OCI-LY7 (cell line): ENCODE measurements at regions of chr2 and their contacts with region 1.

Region 1: DNA sequence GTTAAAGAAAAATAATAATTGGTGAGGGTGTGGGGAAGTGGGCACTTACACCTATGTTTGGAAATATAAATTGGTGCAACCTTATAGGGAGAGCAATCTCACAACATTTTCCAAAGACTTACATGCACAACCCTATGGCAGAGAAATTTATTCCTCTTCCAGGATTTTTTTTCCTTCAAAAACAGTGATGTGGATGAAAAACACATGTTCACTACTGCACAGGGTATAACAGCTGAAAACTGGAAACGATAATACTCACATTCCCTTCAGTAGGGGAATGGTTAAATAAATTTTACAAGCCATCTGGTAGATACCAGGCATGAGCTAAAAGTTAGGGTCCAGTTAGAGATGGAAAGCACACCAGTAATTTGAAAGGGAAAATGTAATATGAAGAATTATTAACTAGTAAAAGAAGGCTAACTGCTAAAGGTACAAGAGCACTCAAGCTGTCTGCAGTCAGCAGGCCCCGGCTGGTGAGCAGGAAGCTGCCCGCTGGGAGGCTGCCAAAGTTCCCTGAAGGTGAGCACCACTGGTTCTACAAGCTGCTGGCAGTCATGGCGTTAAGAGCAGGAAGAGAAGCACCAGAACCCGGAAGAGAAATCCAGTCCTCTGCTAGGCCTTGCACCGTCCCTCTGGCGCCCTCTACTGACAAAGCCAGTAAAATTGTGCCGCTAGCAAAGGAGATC is 28.4 kb upstream of the CASP8 start:
- DNase-seq: peak; percentile 96
- H3K4me3 ChIP-seq: peak overlapping the region; percentile 27
- H3K27ac ChIP-seq: peak overlapping the region; percentile 19
- H3K4me1 ChIP-seq: peaks cover 39% of the 10 kb centered on the region
- CTCF ChIP-seq: peak; percentile 97

Region 2: DNA sequence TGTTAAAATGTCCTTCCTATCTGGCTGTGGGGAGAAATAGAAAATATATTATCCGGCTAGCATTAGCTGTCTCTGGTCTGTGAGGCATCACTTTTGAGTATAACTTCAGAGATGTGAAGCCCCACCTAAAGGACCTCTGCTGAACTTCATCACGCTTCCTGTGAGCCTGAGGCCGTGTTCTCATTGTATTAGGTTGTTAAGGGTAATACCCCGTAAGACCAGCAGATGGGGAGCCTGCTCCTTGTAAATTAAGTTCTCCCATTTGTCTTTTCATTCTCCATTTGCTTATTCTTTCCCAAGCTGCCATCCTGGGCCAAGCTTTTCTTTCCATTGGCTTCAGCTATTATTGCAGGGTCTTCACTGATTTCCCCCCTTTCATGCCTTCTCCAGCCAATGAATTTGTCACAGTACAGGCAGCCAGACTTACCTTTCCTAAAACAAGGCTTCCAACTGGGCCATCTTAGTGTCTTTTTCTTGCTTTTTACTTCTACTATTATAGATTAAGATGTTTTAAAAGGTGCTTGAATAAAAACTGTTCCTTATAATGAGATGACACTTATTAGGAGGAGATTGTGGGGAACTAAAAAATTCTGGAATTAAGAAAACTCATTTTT is 330.4 kb before region 1 on chr2:
- CTCF ChIA-PET with region 1: interaction called, 7 read pairs
- POLR2A ChIA-PET with region 1: interaction called, 3 read pairs
- intact Hi-C with region 1: loop called (anchors 1 kb)
- DNase-seq: peak; percentile 92
- H3K4me3 ChIP-seq: no peak overlapping the region
- H3K27ac ChIP-seq: no peak overlapping the region
- H3K4me1 ChIP-seq: peaks cover 5% of the 10 kb centered on the region
- CTCF ChIP-seq: peak; percentile 95

Region 3: GRCh38 chr2:201118121-201118960 is 113.6 kb before region 1 on chr2:
- CTCF ChIA-PET with region 1: interaction called, 8 read pairs
- POLR2A ChIA-PET with region 1: interaction called, 6 read pairs
- intact Hi-C with region 1: loop called (anchors 2 kb)
- DNase-seq: peak; percentile 91
- H3K4me3 ChIP-seq: peak overlapping the region; percentile 81
- H3K27ac ChIP-seq: peak overlapping the region; percentile 95
- H3K4me1 ChIP-seq: peaks cover 43% of the 10 kb centered on the region
- CTCF ChIP-seq: peak; percentile 85

Region 4: DNA sequence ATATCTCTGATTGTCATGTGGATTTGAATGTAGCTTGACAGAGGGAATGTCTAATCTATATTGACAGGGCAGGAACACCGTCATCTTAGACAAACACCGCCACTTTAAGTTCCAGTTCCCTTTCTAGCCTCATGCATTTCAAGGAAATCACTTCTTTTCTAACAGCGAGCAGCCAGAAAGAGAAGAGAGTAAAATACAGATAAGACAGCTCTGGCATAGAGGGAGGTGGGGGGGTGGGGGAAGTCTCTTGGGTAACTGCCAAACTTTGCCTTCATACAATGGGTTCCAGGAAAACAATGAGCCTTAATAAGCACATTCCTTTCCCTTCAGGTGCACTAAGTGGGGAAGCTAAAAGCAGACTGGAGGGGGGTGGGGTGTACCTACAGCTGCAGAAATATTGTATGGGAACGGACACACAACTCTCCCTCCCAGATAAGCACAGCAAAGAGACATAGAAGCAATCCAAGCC is 11.8 kb before region 1 on chr2:
- CTCF ChIA-PET with region 1: interaction called, 9 read pairs
- POLR2A ChIA-PET with region 1: interaction called, 10 read pairs
- intact Hi-C with region 1: no loop called
- DNase-seq: peak; percentile 15
- H3K4me3 ChIP-seq: no peak overlapping the region
- H3K27ac ChIP-seq: no peak overlapping the region
- H3K4me1 ChIP-seq: peaks cover 22% of the 10 kb centered on the region
- CTCF ChIP-seq: no peak

Region 5: GRCh38 chr2:201451292-201452057 is 219.6 kb after region 1 on chr2 and contains the starts of genes STRADB and TRAK2:
- CTCF ChIA-PET with region 1: no interaction called
- POLR2A ChIA-PET with region 1: interaction called, 3 read pairs
- intact Hi-C with region 1: loop called (anchors 5 kb)
- DNase-seq: peak; percentile 96
- H3K4me3 ChIP-seq: peak within 1 kb of the TSS; percentile 99
- H3K27ac ChIP-seq: peak within 1 kb of the TSS; percentile 80
- H3K4me1 ChIP-seq: peaks cover 14% of the 10 kb centered on the region
- CTCF ChIP-seq: peak; percentile 25; the same call in 1 of the 2 replicates
- total RNA-seq, gene STRADB: 8.4 and 11.9 TPM in 2 replicates
- total RNA-seq, gene TRAK2: 4.9 and 7.1 TPM in 2 replicates